Activated naive CD4-positive, alpha-beta T cell treated with anti-CD3 and anti-CD28 coated beads for 36 hours (primary cell): ENCODE measurements at regions of chr7 and their contacts with region 1.

Region 1: GRCh38 chr7:106009403-106010226 is 46.6 kb downstream of the CDHR3 start:
- DNase-seq: peak; percentile 89
- H3K4me3 Mint-ChIP-seq: no peak overlapping the region
- H3K27ac Mint-ChIP-seq: no peak overlapping the region
- H3K4me1 Mint-ChIP-seq: peaks cover 22% of the 10 kb centered on the region
- H3K27me3 Mint-ChIP-seq: no peaks in the 10 kb centered on the region

Region 2: GRCh38 chr7:105652359-105652993 is 357.1 kb before region 1 on chr7:
- CTCF ChIA-PET with region 1: interaction called, 5 read pairs
- intact Hi-C with region 1: loop called (anchors 1 kb)
- DNase-seq: peak; percentile 79
- H3K4me3 Mint-ChIP-seq: no peak overlapping the region
- H3K27ac Mint-ChIP-seq: no peak overlapping the region
- H3K4me1 Mint-ChIP-seq: peaks cover 10% of the 10 kb centered on the region
- H3K27me3 Mint-ChIP-seq: no peaks in the 10 kb centered on the region

Region 3: DNA sequence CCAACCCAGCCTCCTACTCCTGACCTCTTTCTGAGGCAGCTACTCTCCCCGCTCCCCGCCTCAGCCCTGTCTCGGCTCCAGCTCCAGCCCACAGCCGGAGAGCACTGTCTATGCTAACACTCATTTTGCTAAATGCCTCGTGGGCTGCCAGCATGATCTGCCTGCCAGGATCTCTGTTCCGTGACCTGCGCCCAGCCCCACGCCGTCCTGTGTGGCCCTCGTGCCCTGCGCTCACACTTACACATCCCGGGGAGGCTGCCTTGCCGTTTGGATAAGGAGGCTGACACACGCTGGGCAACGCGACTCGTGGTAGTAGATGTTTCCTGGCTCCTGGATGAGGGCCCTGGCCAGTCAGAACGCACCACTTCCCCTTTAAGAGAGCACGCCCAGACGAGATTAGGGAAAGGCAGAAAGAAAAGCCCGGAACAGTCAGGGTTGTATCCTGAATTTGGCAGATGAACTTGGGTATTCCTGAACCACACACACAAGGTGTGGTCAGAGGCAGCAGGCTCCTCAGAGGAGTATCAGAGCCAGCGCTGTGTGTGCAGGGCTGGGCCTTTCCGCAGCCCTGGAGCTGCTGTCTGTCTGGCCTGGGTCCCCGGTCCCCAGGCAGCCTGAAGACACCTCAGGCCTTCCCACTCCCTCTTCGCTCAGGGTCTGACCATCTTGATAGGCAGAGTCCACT is 330.7 kb before region 1 on chr7:
- CTCF ChIA-PET with region 1: no interaction called
- intact Hi-C with region 1: loop called (anchors 5 kb)
- DNase-seq: peak; percentile 60
- H3K4me3 Mint-ChIP-seq: peak overlapping the region; percentile 82
- H3K27ac Mint-ChIP-seq: peak overlapping the region; percentile 86
- H3K4me1 Mint-ChIP-seq: peaks cover 59% of the 10 kb centered on the region
- H3K27me3 Mint-ChIP-seq: no peaks in the 10 kb centered on the region

Region 4: GRCh38 chr7:105691733-105692564 is 317.7 kb before region 1 on chr7:
- CTCF ChIA-PET with region 1: no interaction called
- intact Hi-C with region 1: loop called (anchors 1 kb)
- DNase-seq: peak; percentile 80
- H3K4me3 Mint-ChIP-seq: peak overlapping the region; percentile 77
- H3K27ac Mint-ChIP-seq: peak overlapping the region; percentile 79
- H3K4me1 Mint-ChIP-seq: peaks cover 36% of the 10 kb centered on the region
- H3K27me3 Mint-ChIP-seq: no peaks in the 10 kb centered on the region

Region 5: DNA sequence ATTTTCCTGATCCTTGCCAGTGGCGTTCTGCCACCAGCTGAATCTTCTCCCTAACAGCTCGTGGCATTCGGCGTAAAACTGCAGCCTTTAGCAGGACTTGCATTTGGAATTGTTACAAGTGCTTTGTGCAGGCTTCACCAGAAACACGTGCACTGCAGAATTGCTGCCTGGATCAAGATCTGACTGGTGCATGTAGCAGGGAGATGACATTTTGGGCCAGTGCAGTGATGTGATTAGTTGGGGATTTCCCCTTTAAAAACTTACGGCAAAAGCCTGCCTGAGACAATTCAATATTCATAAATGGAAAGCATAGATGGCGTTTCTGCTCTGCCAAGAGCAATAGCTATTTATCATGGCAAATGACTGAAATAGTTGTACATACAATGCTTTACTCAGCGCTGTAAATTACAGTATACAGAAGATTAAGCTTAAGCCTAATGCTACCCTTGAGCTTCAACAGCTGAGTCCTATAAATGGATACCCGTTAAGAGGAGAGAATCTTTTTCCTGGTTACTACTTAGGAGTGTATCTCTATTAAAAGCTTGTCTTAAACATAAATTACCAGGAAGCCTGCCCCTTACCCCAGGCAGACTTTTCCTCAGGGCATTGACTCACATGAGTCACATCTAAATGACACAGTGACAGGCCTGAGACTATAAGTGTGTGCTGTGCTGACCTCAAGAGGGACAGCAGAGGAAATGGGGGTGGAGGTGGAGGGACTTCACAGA is 239.6 kb before region 1 on chr7:
- CTCF ChIA-PET with region 1: interaction called, 3 read pairs
- intact Hi-C with region 1: loop called (anchors 1 kb)
- DNase-seq: peak; percentile 39
- H3K4me3 Mint-ChIP-seq: no peak overlapping the region
- H3K27ac Mint-ChIP-seq: no peak overlapping the region
- H3K4me1 Mint-ChIP-seq: peaks cover 26% of the 10 kb centered on the region
- H3K27me3 Mint-ChIP-seq: no peaks in the 10 kb centered on the region

Region 6: GRCh38 chr7:105934572-105935185 is 74.9 kb before region 1 on chr7:
- CTCF ChIA-PET with region 1: no interaction called
- intact Hi-C with region 1: loop called (anchors 2 kb)
- DNase-seq: peak; percentile 20
- H3K4me3 Mint-ChIP-seq: no peak overlapping the region
- H3K27ac Mint-ChIP-seq: no peak overlapping the region
- H3K4me1 Mint-ChIP-seq: peaks cover 12% of the 10 kb centered on the region
- H3K27me3 Mint-ChIP-seq: no peaks in the 10 kb centered on the region

Region 7: GRCh38 chr7:106022193-106022821 is 12.7 kb after region 1 on chr7:
- CTCF ChIA-PET with region 1: interaction called, 8 read pairs
- intact Hi-C with region 1: loop called (anchors 1 kb)
- DNase-seq: peak; percentile 82
- H3K4me3 Mint-ChIP-seq: peak overlapping the region; percentile 19
- H3K27ac Mint-ChIP-seq: peak overlapping the region; percentile 62
- H3K4me1 Mint-ChIP-seq: peaks cover 71% of the 10 kb centered on the region
- H3K27me3 Mint-ChIP-seq: no peaks in the 10 kb centered on the region